IMR-90 (cell line): ENCODE measurements at regions of chr19 and their contacts with region 1.

Region 1: GRCh38 chr19:42919511-42920021 is 1.9 kb upstream of the PSG6 start:
- DNase-seq: no peak
- ATAC-seq: no peak
- H3K4me3 ChIP-seq: no peak overlapping the region
- H3K27ac ChIP-seq: no peak overlapping the region
- H3K4me1 ChIP-seq: no peaks in the 10 kb centered on the region
- H3K27me3 ChIP-seq: no peaks in the 10 kb centered on the region
- CTCF ChIP-seq: peak; percentile 29; the same call in 1 of the 2 replicates
- POLR2A ChIP-seq: no peak
- RAD21 ChIP-seq: peak; percentile 25

Region 2: GRCh38 chr19:42584466-42584865 is 335.1 kb before region 1 on chr19:
- CTCF ChIA-PET with region 1: no interaction called
- POLR2A ChIA-PET with region 1: no interaction called
- dilution Hi-C with region 1: no loop called
- in situ Hi-C with region 1: no loop called
- intact Hi-C with region 1: no loop called
- DNase-seq: no peak
- ATAC-seq: no peak
- H3K4me3 ChIP-seq: no peak overlapping the region
- H3K27ac ChIP-seq: no peak overlapping the region
- H3K4me1 ChIP-seq: no peaks in the 10 kb centered on the region
- H3K27me3 ChIP-seq: peaks cover 11% of the 10 kb centered on the region
- CTCF ChIP-seq: no peak
- POLR2A ChIP-seq: no peak
- RAD21 ChIP-seq: no peak

Region 3: GRCh38 chr19:42683917-42684513 is 235.6 kb before region 1 on chr19:
- CTCF ChIA-PET with region 1: no interaction called
- POLR2A ChIA-PET with region 1: no interaction called
- dilution Hi-C with region 1: no loop called
- in situ Hi-C with region 1: no loop called
- intact Hi-C with region 1: loop called (anchors 5 kb)
- DNase-seq: peak; percentile 31
- ATAC-seq: 0 out of 2 replicates have a peak, but pooled peaks have one; percentile 42
- H3K4me3 ChIP-seq: no peak overlapping the region
- H3K27ac ChIP-seq: no peak overlapping the region
- H3K4me1 ChIP-seq: no peaks in the 10 kb centered on the region
- H3K27me3 ChIP-seq: peaks cover 5% of the 10 kb centered on the region
- CTCF ChIP-seq: peak; percentile 67
- POLR2A ChIP-seq: no peak
- RAD21 ChIP-seq: peak; percentile 63

Region 4: GRCh38 chr19:42693764-42694350 is 225.7 kb before region 1 on chr19:
- CTCF ChIA-PET with region 1: no interaction called
- POLR2A ChIA-PET with region 1: no interaction called
- dilution Hi-C with region 1: no loop called
- in situ Hi-C with region 1: loop called (anchors 10 kb)
- intact Hi-C with region 1: no loop called
- DNase-seq: peak; percentile 46
- ATAC-seq: peak; percentile 88
- H3K4me3 ChIP-seq: no peak overlapping the region
- H3K27ac ChIP-seq: no peak overlapping the region
- H3K4me1 ChIP-seq: no peaks in the 10 kb centered on the region
- H3K27me3 ChIP-seq: peaks cover 37% of the 10 kb centered on the region
- CTCF ChIP-seq: peak; percentile 72
- POLR2A ChIP-seq: no peak
- RAD21 ChIP-seq: peak; percentile 83